GM13977 (cell line): ENCODE measurements at regions of chr3 and their contacts with region 1.

Region 1: GRCh38 chr3:32973982-32974381 is 22.5 kb downstream of the CCR4 start:
- DNase-seq: peak; percentile 47
- CTCF ChIP-seq: no peak

Region 2: DNA sequence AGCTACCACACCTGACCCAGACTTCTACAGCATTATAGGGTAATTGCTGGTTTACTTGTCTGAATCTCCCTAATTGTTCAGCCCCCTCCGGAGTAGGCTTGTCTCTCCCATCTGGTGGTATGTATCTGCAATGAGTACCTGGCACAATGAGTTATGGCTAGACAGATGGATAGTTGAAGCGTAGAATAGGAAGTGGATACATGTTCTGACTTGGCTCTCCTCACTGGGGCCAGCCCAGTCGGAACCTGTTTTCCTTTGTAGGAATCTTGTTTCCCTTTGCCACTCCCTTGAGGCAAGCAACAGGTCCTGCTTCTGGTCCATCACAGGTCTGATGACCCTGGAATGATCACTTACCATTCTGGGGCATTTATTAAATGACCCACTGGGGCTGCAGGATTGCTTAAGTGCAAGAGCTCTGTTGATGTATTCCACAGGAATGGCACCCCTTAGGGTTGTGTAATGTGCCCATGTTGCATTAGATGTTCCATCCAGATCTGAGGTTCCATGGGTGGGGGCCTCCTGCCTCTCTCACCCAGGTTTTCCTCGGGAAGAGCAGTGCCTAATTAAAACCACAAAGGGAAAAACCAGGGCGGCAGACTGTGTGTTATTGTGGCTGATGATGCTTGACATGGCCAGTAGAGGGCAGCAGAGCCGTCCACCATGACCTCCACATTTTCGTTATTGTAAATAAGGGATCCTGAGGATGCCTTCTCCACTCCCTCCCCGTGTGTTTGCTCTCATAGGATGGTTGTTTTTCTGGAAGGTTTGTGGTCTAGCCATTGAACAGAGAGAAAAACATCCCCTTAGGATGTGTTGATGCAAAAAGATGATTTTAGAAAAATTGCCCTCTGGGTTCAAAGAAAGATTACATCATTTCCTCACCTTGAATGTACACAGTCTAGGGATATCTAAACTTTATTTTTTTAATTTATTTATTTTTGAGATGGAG is 677.5 kb before region 1 on chr3:
- in situ Hi-C with region 1: no loop called
- DNase-seq: peak; percentile 68
- CTCF ChIP-seq: peak; percentile 86

Region 3: DNA sequence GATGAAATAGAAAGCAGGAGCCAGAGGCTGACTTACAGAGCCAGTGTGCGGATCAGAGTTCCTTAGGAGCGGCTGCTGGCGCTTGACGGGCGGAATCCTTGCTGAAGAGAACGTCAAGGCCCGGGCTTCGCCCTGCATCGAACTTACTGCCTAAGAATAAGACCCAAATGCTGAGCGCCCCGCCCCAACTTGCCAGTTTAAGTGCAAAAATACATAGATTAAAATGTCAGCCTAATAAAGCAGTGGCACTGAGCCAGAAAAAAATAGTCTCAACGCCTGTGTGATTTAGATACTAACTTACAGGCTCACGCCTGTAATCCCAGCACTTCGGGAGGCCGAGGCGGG is 467.2 kb after region 1 on chr3:
- in situ Hi-C with region 1: no loop called
- DNase-seq: no peak
- CTCF ChIP-seq: no peak

Region 4: DNA sequence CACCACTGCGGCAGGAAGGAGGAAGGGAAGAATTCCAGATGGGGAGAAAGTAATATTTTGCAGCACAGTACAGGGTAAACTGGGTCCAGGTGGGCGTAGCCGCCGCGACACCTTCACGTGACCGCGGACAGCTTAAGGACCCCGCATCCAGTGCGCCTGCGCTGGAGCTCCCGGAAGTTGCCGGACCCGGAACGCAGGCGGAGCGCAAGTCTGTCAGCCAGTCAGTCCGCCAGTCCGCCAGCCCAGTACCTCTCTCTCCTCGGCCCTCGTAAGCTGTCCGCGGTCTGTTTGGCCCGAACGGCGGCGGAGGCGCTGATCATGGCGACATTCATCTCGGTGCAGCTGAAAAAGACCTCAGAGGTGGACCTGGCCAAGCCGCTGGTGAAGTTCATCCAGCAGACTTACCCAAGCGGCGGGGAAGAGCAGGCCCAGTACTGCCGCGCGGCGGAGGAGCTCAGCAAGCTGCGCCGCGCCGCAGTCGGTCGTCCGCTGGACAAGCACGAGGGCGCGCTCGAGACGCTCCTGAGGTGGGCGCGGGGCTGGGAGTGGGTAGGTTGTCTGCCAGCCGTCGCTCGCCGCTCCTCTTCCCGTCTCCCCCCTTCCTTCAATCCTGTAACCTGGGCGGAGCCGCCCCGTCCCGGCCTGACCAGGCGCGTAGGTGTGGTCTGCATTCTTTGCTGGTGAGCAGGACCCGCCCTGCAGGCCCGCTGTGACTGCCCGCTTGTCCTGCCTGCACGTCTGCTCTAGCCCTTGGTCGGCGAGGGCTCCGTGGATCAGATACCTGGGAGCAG is 824.6 kb after region 1 on chr3 and contains the start of gene PDCD6IP:
- in situ Hi-C with region 1: loop called (anchors 25 kb)
- DNase-seq: peak; percentile 90
- CTCF ChIP-seq: no peak